ENCODE measurements at regions of chr18 and their contacts with region 1.

Region 1: GRCh38 chr18:50429207-50429948 is 54.5 kb downstream of the SKA1 start:
- DNase-seq: no peak
- ATAC-seq: no peak
- H3K4me3 Mint-ChIP-seq: no peak overlapping the region
- H3K27ac Mint-ChIP-seq: no peak overlapping the region
- H3K4me1 Mint-ChIP-seq: no peaks in the 10 kb centered on the region
- H3K27me3 Mint-ChIP-seq: peaks cover 20% of the 10 kb centered on the region

Region 2: DNA sequence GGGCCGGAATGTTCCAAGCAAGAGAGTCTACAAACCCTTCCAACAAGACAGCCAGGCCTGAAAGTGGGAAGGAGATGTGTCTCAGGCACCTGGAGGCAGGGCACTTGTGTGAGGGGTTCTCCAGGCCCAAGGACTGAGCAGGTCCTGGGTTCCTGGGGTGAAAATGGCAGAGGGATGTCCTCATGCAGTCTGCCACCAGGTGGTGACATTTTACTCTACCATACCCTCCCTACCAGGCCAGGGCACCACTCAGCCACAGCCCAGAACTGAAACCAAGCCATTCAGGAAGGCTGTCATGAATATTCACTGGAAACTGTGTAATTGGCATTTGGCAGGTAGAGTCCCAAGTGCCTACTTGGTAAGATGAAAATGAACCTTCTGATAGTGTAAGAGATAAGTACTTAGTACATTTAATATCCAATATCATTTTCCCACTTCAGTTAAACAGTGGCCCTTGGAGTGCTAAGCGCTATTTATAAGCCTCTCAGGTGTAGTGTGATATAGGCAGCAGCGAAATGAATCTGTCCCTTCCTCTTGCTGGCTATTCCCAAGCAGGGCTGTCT is 419.5 kb before region 1 on chr18:
- CTCF ChIA-PET with region 1: no interaction called
- POLR2A ChIA-PET with region 1: no interaction called
- intact Hi-C with region 1: loop called in 1 of 2 experiments (anchors 10 kb)
- DNase-seq: peak; percentile 67
- ATAC-seq: peak; percentile 95
- H3K4me3 Mint-ChIP-seq: no peak overlapping the region
- H3K27ac Mint-ChIP-seq: no peak overlapping the region
- H3K4me1 Mint-ChIP-seq: no peaks in the 10 kb centered on the region
- H3K27me3 Mint-ChIP-seq: peaks cover 3% of the 10 kb centered on the region

Region 3: DNA sequence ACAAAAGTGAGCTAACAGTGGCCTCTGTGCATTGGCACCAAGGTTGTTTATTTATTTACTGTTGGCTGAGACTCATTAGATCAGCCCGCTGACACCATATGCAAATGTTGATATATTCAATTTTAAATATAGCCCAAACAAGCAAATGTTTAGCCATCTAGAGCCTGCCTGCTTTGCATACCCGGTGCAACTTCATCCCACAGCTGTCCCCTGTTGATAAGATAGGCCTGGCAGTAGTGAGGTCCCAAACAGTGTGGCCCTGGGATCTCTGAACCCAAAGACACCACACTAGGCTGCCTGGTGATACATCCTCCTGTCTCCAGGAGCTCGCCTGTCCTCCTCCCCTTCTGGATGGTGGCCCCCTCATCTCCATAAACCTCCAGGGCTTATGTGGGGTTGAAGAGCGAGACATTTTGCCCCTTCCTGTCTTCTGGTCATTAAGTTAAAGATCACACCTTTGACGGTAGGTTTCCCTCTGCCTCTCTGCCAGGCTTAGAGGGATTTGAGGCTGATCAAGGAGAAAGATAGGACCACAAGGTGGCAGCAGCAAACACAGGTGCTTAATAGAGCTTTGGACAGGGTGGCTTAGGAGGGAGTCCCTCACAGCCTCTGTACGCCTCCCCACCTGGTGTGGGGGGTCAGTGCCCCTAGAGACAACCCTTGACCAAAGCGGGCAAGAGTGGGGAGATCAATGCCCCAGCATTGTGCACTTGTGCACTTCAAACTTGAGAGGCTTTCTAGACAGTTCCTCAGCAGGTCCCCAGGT is 210.8 kb before region 1 on chr18:
- CTCF ChIA-PET with region 1: interaction called, 6 read pairs
- POLR2A ChIA-PET with region 1: no interaction called
- intact Hi-C with region 1: loop called (anchors 1 to 2 kb)
- DNase-seq: peak; percentile 57
- ATAC-seq: peak; percentile 55
- H3K4me3 Mint-ChIP-seq: no peak overlapping the region
- H3K27ac Mint-ChIP-seq: no peak overlapping the region
- H3K4me1 Mint-ChIP-seq: no peaks in the 10 kb centered on the region
- H3K27me3 Mint-ChIP-seq: peaks cover 19% of the 10 kb centered on the region

Region 4: DNA sequence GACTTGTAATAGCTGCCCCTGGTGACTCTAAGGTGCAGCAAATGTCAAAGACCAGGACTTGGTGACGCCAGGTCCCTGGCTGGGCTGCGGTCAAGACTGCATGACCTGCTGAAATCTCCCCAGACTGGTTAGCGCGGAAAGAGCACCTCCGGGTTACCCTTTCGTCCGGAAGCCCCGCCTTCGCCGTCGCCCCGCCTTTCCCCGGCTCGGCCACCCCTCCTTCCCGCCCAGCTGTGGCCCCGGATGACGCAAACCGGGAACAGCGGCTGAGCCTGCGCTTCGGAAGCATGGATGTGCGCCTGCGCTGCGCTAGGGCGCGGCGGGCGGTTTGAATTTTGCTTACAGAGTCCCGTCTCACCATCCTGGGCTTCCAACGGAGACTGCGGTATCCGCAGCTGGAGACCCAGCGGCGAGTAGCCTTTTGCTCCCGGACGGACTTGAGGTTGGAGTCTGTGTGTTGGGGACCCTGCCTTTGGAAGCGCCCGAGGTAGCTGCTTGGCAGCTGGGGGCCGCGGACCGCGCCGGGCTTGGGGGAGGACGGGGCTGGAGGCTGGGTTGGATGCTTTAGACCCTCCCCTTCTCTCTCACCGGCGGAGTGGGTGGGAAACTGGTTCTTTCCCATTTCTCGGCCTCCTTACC is 54.5 kb before region 1 on chr18 and contains the start of gene SKA1:
- CTCF ChIA-PET with region 1: no interaction called
- POLR2A ChIA-PET with region 1: no interaction called
- intact Hi-C with region 1: no loop called
- DNase-seq: peak; percentile 96
- ATAC-seq: peak; percentile 99
- H3K4me3 Mint-ChIP-seq: peak within 1 kb of the TSS; percentile 83
- H3K27ac Mint-ChIP-seq: peak within 1 kb of the TSS; percentile 79
- H3K4me1 Mint-ChIP-seq: peaks cover 2% of the 10 kb centered on the region
- H3K27me3 Mint-ChIP-seq: peaks cover under 1% of the 10 kb centered on the region
- total RNA-seq, gene SKA1: 38.6 to 48.3 TPM

Measured in activated CD4-positive, alpha-beta T cell treated with anti-CD3 and anti-CD28 coated beads for 36 hours (primary cell).